ENCODE measurements at regions of chr12 and their contacts with region 1.

Region 1: GRCh38 chr12:110100315-110100970 is 23.7 kb upstream of the IFT81 start:
- DNase-seq: peak in 8 of 9 donors; percentile 33 to 60 (median 55)
- ATAC-seq: peak; percentile 92
- H3K4me3 ChIP-seq: no peak overlapping the region
- H3K4me3 Mint-ChIP-seq: peak overlapping the region in 2 of 10 donors; percentile 12 to 44
- H3K27ac ChIP-seq: no peak overlapping the region
- H3K27ac Mint-ChIP-seq: peak overlapping the region in 4 of 9 donors; percentile 3 to 69 (median 42)
- H3K4me1 ChIP-seq: peaks cover 3 to 4% of the 10 kb centered on the region in 2 donors
- H3K4me1 Mint-ChIP-seq: peaks cover 0 to 13% (median 8%) of the 10 kb centered on the region in 7 donors
- H3K27me3 ChIP-seq: no peaks in the 10 kb centered on the region
- H3K27me3 Mint-ChIP-seq: no peaks in the 10 kb centered on the region

Region 2: DNA sequence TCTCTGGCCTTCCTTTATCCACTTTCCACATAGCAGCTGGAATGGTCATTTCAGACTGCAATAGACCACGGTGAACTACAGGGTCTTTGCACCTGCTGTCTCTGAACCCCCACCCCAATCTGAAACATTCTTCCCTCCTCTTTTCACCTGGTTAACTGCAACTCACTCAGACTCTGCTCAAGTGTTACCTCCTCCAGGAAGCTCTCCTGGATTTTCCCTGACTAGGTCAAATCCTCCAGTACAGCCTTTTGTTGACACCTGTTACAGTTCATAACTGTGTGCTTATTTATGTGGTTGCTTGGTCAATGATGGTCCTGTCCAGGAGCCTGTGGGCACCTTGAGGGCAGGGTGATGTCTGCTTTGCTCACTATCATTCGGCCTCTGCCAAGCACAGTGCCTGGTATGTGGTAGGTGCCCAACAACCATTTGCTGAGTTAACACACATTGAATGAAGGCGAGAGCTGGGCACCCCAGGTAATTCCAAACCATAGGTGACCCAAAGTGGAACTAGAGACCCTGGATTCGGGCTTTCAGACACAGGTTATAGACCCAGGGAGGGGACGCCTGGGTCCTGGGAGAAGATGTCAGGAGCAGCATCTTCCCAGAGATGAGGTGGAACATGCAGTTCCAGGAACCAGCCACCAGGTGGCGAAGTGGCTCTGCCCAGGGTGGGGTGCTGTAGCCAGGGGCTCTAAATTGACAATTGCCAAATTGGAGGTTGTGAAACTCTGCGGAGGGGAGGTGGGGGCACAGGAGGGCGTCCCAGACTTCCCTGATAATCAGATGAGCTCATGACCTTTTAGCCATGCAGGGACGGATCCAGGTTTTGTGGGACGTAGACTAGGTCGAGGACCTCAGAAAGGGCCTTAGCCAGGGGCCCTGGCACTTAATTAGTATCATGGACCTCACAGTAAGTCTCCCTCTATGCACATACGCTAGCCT is 295.4 kb before region 1 on chr12:
- CTCF ChIA-PET with region 1: no interaction called
- POLR2A ChIA-PET with region 1: no interaction called
- intact Hi-C with region 1: loop called in 1 of 2 experiments (anchors 5 kb)
- DNase-seq: peak; percentile 44 to 73 (median 55)
- ATAC-seq: peak; percentile 90
- H3K4me3 ChIP-seq: no peak overlapping the region
- H3K4me3 Mint-ChIP-seq: no peak overlapping the region
- H3K27ac ChIP-seq: no peak overlapping the region
- H3K27ac Mint-ChIP-seq: peak overlapping the region in 2 of 9 donors; percentile 58 to 74
- H3K4me1 ChIP-seq: no peaks in the 10 kb centered on the region
- H3K4me1 Mint-ChIP-seq: peaks cover 0 to 2% (median 0%) of the 10 kb centered on the region in 7 donors
- H3K27me3 ChIP-seq: no peaks in the 10 kb centered on the region
- H3K27me3 Mint-ChIP-seq: peaks cover 0 to 4% (median 0%) of the 10 kb centered on the region in 5 donors

Region 3: GRCh38 chr12:110124184-110124995 is 23.9 kb after region 1 on chr12 and contains the start of gene IFT81:
- CTCF ChIA-PET with region 1: no interaction called
- POLR2A ChIA-PET with region 1: no interaction called
- intact Hi-C with region 1: loop called in 1 of 2 experiments (anchors 1 kb)
- DNase-seq: peak; percentile 84 to 98 (median 93)
- ATAC-seq: peak; percentile 98
- H3K4me3 ChIP-seq: peak within 1 kb of the TSS; percentile 99
- H3K4me3 Mint-ChIP-seq: peak within 1 kb of the TSS; percentile 83 to 94 (median 92)
- H3K27ac ChIP-seq: peak within 1 kb of the TSS; percentile 84
- H3K27ac Mint-ChIP-seq: peak within 1 kb of the TSS; percentile 56 to 94 (median 90)
- H3K4me1 ChIP-seq: peaks cover 4 to 5% of the 10 kb centered on the region in 2 donors
- H3K4me1 Mint-ChIP-seq: peaks cover 0 to 9% (median 8%) of the 10 kb centered on the region in 7 donors
- H3K27me3 ChIP-seq: no peaks in the 10 kb centered on the region
- H3K27me3 Mint-ChIP-seq: peaks cover 0 to 52% (median 0%) of the 10 kb centered on the region in 5 donors
- total RNA-seq, gene IFT81: 0.66 to 1.3 (median 1.3) TPM

Region 4: DNA sequence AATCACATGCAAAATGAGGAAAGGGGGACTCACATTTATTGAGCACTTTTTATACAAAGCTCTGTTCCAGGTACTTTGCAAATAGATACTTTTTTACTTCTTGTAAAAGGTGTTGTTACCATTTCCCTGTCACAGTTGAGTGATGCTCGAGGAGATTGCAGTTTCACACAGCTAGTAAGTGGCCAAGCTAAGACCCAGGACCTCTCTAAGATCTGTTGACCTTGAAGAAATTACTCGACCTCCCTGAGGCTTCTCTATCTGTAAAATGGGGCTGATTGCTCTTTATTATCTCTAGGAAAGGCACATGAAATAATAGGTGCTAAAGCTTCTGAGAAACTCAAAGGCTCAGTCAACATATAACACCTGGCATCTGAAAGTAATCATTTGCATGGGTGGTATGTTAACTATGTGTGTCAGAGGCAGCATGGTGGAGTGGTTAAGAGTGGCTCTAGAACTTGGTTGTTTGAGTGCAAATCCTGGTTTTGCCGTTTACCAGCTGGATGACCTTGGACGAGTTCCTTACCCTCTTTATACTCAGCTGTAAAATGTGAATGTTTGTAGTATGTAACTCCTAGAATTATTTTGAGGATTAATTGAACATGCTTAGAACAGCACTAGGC is 65.2 kb after region 1 on chr12:
- CTCF ChIA-PET with region 1: no interaction called
- POLR2A ChIA-PET with region 1: no interaction called
- intact Hi-C with region 1: no loop called
- DNase-seq: no peak
- ATAC-seq: no peak
- H3K4me3 ChIP-seq: no peak overlapping the region
- H3K4me3 Mint-ChIP-seq: no peak overlapping the region
- H3K27ac ChIP-seq: no peak overlapping the region
- H3K27ac Mint-ChIP-seq: no peak overlapping the region
- H3K4me1 ChIP-seq: no peaks in the 10 kb centered on the region
- H3K4me1 Mint-ChIP-seq: peaks cover 0 to 5% (median 0%) of the 10 kb centered on the region in 7 donors
- H3K27me3 ChIP-seq: no peaks in the 10 kb centered on the region
- H3K27me3 Mint-ChIP-seq: peaks cover 0 to 3% (median 0%) of the 10 kb centered on the region in 5 donors

Region 5: GRCh38 chr12:110280779-110281548 is 180.5 kb after region 1 on chr12 and contains the start of gene ATP2A2:
- CTCF ChIA-PET with region 1: no interaction called
- POLR2A ChIA-PET with region 1: no interaction called
- intact Hi-C with region 1: loop called in 1 of 2 experiments (anchors 1 kb)
- DNase-seq: peak; percentile 87 to 93 (median 91)
- ATAC-seq: peak; percentile 96
- H3K4me3 ChIP-seq: peak within 1 kb of the TSS; percentile 83
- H3K4me3 Mint-ChIP-seq: peak within 1 kb of the TSS; percentile 87 to 96 (median 93)
- H3K27ac ChIP-seq: peak within 1 kb of the TSS; percentile 92
- H3K27ac Mint-ChIP-seq: peak within 1 kb of the TSS; percentile 84 to 93 (median 89)
- H3K4me1 ChIP-seq: peaks cover 12 to 27% of the 10 kb centered on the region in 2 donors
- H3K4me1 Mint-ChIP-seq: peaks cover 39 to 50% (median 48%) of the 10 kb centered on the region in 7 donors
- H3K27me3 ChIP-seq: no peaks in the 10 kb centered on the region
- H3K27me3 Mint-ChIP-seq: peaks cover 0 to 11% (median 0%) of the 10 kb centered on the region in 5 donors
- total RNA-seq, gene ATP2A2: 81.4 to 160 (median 83.9) TPM

Region 6: DNA sequence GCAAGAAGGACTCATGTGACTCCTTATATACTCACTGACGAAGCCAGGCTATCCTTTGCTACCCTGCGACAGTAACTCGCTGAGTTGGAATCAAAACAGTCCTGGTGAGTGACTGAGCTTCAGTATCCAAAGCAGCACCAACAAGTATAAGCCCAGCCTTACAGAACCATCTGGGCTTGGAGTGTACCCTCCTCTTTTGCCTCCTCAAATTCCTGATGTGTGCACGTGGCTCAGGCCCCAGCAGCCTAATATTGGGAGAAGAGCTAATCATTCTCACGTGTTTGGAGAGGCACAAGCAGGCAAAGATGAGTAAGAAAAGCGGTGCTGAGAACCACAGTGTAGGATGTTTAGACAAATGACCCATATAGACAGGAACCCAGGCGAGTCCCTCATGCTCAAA is 448.2 kb after region 1 on chr12:
- CTCF ChIA-PET with region 1: no interaction called
- POLR2A ChIA-PET with region 1: no interaction called
- intact Hi-C with region 1: loop called in 1 of 2 experiments (anchors 5 kb)
- DNase-seq: no peak
- ATAC-seq: no peak
- H3K4me3 ChIP-seq: no peak overlapping the region
- H3K4me3 Mint-ChIP-seq: no peak overlapping the region
- H3K27ac ChIP-seq: no peak overlapping the region
- H3K27ac Mint-ChIP-seq: peak overlapping the region in 3 of 9 donors; percentile 28 to 68 (median 55)
- H3K4me1 ChIP-seq: no peaks in the 10 kb centered on the region
- H3K4me1 Mint-ChIP-seq: peaks cover 10 to 55% (median 44%) of the 10 kb centered on the region in 7 donors
- H3K27me3 ChIP-seq: no peaks in the 10 kb centered on the region
- H3K27me3 Mint-ChIP-seq: no peaks in the 10 kb centered on the region

Region 7: GRCh38 chr12:110888256-110888991 is 788.0 kb after region 1 on chr12:
- CTCF ChIA-PET with region 1: no interaction called
- POLR2A ChIA-PET with region 1: no interaction called
- intact Hi-C with region 1: loop called in 1 of 2 experiments (anchors 1 kb)
- DNase-seq: no peak
- ATAC-seq: no peak
- H3K4me3 ChIP-seq: no peak overlapping the region
- H3K4me3 Mint-ChIP-seq: peak overlapping the region; percentile 51 to 97 (median 92)
- H3K27ac ChIP-seq: no peak overlapping the region
- H3K27ac Mint-ChIP-seq: peak overlapping the region in 5 of 9 donors; percentile 69 to 91 (median 77)
- H3K4me1 ChIP-seq: peaks cover 0 to 4% of the 10 kb centered on the region in 2 donors
- H3K4me1 Mint-ChIP-seq: peaks cover 0 to 8% (median 4%) of the 10 kb centered on the region in 7 donors
- H3K27me3 ChIP-seq: no peaks in the 10 kb centered on the region
- H3K27me3 Mint-ChIP-seq: peaks cover 0 to 12% (median 0%) of the 10 kb centered on the region in 5 donors

Measured in naive thymus-derived CD4-positive, alpha-beta T cell (primary cell).